Mammary epithelial cell (primary cell): ENCODE measurements at regions of chr12 and their contacts with region 1.

Region 1: GRCh38 chr12:53321074-53321814 is at the start of gene AAAS:
- DNase-seq: peak; percentile 92
- H3K4me3 ChIP-seq: peak within 1 kb of the TSS; percentile 74 to 86 (median 76)
- H3K27ac ChIP-seq: peak within 1 kb of the TSS; percentile 53
- H3K4me1 ChIP-seq: peaks cover 29% of the 10 kb centered on the region
- H3K27me3 ChIP-seq: no peaks in the 10 kb centered on the region
- CTCF ChIP-seq: peak; percentile 98 to 99
- total RNA-seq, gene AAAS: 29.2 to 45.4 TPM

Region 2: GRCh38 chr12:52980693-52981423 is 340.4 kb before region 1 on chr12:
- CTCF ChIA-PET with region 1: no interaction called
- dilution Hi-C with region 1: no loop called
- in situ Hi-C with region 1: no loop called
- intact Hi-C with region 1: no loop called
- DNase-seq: peak; percentile 80
- H3K4me3 ChIP-seq: no peak overlapping the region
- H3K27ac ChIP-seq: no peak overlapping the region
- H3K4me1 ChIP-seq: no peaks in the 10 kb centered on the region
- H3K27me3 ChIP-seq: no peaks in the 10 kb centered on the region
- CTCF ChIP-seq: peak; percentile 99

Region 3: GRCh38 chr12:53213348-53213747 is 107.9 kb before region 1 on chr12:
- CTCF ChIA-PET with region 1: interaction called, 9 read pairs
- dilution Hi-C with region 1: no loop called
- in situ Hi-C with region 1: no loop called
- intact Hi-C with region 1: loop called (anchors 1 kb)
- DNase-seq: no peak
- H3K4me3 ChIP-seq: no peak overlapping the region
- H3K27ac ChIP-seq: no peak overlapping the region
- H3K4me1 ChIP-seq: peaks cover 22% of the 10 kb centered on the region
- H3K27me3 ChIP-seq: no peaks in the 10 kb centered on the region
- CTCF ChIP-seq: peak; percentile 71 to 95

Region 4: GRCh38 chr12:53344824-53345485 is 23.7 kb after region 1 on chr12:
- CTCF ChIA-PET with region 1: interaction called, 17 read pairs
- dilution Hi-C with region 1: no loop called
- in situ Hi-C with region 1: no loop called
- intact Hi-C with region 1: loop called (anchors 1 kb)
- DNase-seq: peak; percentile 58
- H3K4me3 ChIP-seq: peak overlapping the region; percentile 59 to 65 (median 62)
- H3K27ac ChIP-seq: no peak overlapping the region
- H3K4me1 ChIP-seq: peaks cover 6% of the 10 kb centered on the region
- H3K27me3 ChIP-seq: no peaks in the 10 kb centered on the region
- CTCF ChIP-seq: peak; percentile 40 to 84

Region 5: GRCh38 chr12:53365245-53365904 is 44.1 kb after region 1 on chr12:
- CTCF ChIA-PET with region 1: no interaction called
- dilution Hi-C with region 1: no loop called
- in situ Hi-C with region 1: no loop called
- intact Hi-C with region 1: no loop called
- DNase-seq: no peak
- H3K4me3 ChIP-seq: no peak overlapping the region
- H3K27ac ChIP-seq: no peak overlapping the region
- H3K4me1 ChIP-seq: peaks cover 6% of the 10 kb centered on the region
- H3K27me3 ChIP-seq: no peaks in the 10 kb centered on the region
- CTCF ChIP-seq: no peak

Region 6: GRCh38 chr12:53500776-53501614 is 179.8 kb after region 1 on chr12 and contains the start of gene TARBP2:
- CTCF ChIA-PET with region 1: interaction called, 37 read pairs
- dilution Hi-C with region 1: no loop called
- in situ Hi-C with region 1: no loop called
- intact Hi-C with region 1: loop called (anchors 2 kb)
- DNase-seq: peak; percentile 99
- H3K4me3 ChIP-seq: peak within 1 kb of the TSS; percentile 63 to 72 (median 71)
- H3K27ac ChIP-seq: peak within 1 kb of the TSS; percentile 69
- H3K4me1 ChIP-seq: peaks cover 33% of the 10 kb centered on the region
- H3K27me3 ChIP-seq: no peaks in the 10 kb centered on the region
- CTCF ChIP-seq: no peak
- total RNA-seq, gene TARBP2: 21.2 to 32.2 TPM

Region 7: DNA sequence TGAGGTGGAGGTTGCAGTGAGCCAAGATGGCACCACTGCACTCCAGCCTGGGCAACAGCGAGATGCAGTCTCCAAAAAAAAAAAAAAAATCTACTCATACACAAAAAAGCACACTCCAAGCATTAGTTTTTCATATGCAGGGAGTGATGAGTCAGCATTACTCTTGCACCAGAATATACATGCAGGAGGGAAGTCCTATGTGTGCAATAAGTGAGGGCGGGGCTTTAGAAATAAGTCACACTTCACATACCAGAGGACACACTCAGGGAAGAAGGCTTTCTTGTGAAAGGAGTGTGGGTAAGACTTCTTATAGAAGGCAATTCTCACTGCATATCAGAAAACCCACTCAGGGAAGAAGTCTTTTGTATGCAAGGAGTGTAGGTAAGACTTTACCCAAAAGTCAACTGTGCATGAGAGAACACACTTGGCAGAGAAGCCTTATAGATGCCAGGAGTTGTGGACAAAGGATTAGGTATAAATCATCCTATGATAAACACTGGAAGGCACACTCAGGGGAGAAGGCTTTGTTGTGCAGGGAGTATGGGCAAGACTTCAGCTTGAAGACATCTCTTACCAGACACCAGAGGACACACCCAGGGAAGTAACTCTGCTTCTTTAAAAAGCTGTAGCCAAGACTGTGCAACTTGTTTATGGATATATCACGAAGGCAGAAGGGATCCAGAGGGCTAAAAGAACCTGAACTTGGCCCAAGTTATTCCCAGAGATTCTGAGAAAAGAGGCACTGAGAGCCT is 254.4 kb after region 1 on chr12:
- CTCF ChIA-PET with region 1: interaction called, 11 read pairs
- dilution Hi-C with region 1: no loop called
- in situ Hi-C with region 1: no loop called
- intact Hi-C with region 1: no loop called
- DNase-seq: peak; percentile 87
- H3K4me3 ChIP-seq: no peak overlapping the region
- H3K27ac ChIP-seq: no peak overlapping the region
- H3K4me1 ChIP-seq: peaks cover 9% of the 10 kb centered on the region
- H3K27me3 ChIP-seq: no peaks in the 10 kb centered on the region
- CTCF ChIP-seq: no peak